A549 (cell line): ENCODE measurements at regions of chr20 and their contacts with region 1.

Region 1: DNA sequence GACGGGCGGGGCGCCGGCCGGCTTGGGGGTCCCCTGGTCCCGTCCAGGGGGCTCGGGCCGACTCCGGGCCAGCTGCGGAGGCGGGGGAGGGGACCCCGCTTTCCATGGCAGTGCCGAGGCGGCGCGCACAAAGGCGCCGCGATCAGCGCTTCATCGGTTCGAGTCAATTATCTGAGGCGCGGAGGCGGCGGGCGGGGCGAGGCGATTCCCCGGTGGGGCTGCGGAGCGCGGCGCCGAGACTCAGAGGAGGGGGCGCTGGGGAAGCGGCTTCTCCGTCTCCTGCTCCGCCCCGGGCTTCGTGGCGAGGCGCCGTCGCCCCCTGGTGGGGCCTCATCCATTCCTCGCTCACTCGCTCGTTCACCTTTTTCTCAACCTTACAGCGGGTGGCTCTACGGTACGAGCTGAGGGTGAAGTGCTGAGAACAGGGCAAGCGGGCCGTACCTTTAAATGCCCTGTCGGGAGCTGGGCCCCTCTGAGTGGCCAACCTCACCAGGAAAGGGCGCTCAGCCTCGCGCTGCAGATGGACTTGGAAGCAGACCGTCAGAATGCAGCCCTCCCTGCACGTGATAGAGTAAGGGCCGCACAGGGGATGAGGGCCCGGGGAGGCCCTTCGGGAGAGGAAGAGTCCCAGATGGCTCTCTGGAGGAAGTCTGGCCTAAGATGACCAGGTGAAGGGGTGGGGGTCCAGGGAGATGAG is 39.9 kb downstream of the SLC52A3 start:
- DNase-seq: peak; percentile 80 to 84
- ATAC-seq: peak; percentile 91 to 97
- H3K4me3 ChIP-seq: peak overlapping the region; percentile 66
- H3K27ac ChIP-seq: peak overlapping the region; percentile 75 to 90
- H3K4me1 ChIP-seq: 0 out of 3 replicates have a peak, but pooled peaks cover 3% of the 10 kb centered on the region
- CTCF ChIP-seq: peak; percentile 89
- EP300 ChIP-seq: no peak
- POLR2A ChIP-seq: no peak
- RAD21 ChIP-seq: peak; percentile 87 to 89

Region 2: DNA sequence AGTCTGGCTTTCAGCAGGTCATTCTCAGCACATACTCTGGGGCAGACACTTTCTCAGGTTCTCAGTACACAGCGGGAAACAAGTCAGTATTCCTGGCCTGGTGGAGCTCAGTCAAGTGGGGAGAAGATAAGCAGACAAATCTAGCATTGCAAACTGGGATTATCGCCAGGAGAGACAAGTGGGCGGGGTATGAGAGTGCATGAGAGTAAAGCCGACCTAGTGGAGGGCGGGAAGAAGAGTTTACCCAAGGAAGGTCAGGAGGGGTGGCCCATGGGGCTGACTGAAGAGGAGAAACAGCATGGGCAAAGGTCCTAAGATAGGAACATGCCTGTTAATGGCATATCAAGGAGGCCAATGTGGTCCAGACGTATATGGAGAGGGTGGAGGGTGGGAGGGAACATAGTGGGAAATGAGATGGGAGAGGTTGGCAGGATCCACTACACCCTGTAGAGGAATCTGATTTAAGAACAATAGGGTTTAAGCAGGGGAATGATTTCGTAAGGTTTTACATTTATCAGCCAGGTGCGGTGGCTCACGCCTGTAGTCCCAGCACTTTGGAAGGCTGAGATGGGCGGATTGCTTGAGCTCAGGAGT is 172.4 kb before region 1 on chr20:
- CTCF ChIA-PET with region 1: interaction called, 432 read pairs
- POLR2A ChIA-PET with region 1: no interaction called
- DNase-seq: no peak
- ATAC-seq: no peak; a peak in 2 of 6 replicates
- H3K4me3 ChIP-seq: no peak overlapping the region
- H3K27ac ChIP-seq: no peak overlapping the region
- H3K4me1 ChIP-seq: peaks cover 16% of the 10 kb centered on the region; the same call in 2 of the 3 replicates
- CTCF ChIP-seq: no peak
- EP300 ChIP-seq: no peak
- POLR2A ChIP-seq: no peak
- RAD21 ChIP-seq: no peak

Region 3: DNA sequence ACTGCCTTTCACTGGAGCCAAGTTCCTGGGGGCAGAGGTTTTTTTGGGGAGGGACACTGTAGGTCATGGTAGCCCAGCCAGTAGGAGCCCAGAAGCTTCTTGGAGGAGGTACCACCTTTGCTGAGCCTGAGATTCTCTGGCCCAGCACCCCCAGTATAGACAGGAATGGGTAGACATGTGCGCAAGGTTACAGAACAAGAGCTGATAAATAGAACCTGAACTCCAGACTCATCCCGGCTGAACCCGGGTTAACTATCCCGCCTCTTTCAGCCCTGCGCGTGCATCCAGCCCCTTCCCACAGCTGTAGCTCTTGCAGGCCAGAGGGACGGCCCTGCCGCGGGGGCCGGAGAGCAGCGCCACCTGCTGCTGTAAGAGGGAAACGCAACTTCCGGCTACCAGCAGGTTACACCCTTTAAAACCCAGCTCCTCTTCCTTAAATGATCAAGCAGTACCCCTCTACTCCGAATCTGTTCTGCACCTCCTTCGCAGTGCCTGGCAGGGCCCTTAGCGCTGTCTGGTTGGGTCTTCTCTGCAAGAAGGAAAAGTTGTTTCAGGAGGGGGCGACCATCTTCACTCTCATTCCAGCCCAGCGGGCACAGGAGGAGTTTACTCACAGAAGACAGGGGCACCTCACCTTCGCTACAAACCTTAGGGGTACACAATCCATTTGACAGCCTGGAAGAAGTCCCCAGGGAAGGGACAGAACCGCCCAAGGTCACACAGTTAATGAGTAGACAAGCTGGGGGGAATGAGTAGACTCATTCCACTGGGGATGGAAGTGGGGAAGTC is 82.9 kb before region 1 on chr20:
- CTCF ChIA-PET with region 1: interaction called, 59 read pairs
- POLR2A ChIA-PET with region 1: no interaction called
- DNase-seq: peak; percentile 87 to 91
- ATAC-seq: peak; percentile 57 to 79
- H3K4me3 ChIP-seq: no peak overlapping the region
- H3K27ac ChIP-seq: peak overlapping the region in 1 of 2 experiments; percentile 50; a peak in 2 of 6 replicates
- H3K4me1 ChIP-seq: peaks cover 25% of the 10 kb centered on the region
- CTCF ChIP-seq: peak; percentile 97
- EP300 ChIP-seq: no peak
- POLR2A ChIP-seq: no peak
- RAD21 ChIP-seq: peak; percentile 73 to 78

Region 4: GRCh38 chr20:658731-659291 is 69.6 kb before region 1 on chr20:
- CTCF ChIA-PET with region 1: interaction called, 10 read pairs
- POLR2A ChIA-PET with region 1: no interaction called
- DNase-seq: no peak
- ATAC-seq: no peak
- H3K4me3 ChIP-seq: no peak overlapping the region
- H3K27ac ChIP-seq: peak overlapping the region; percentile 66 to 69; a peak in 4 of 6 replicates
- H3K4me1 ChIP-seq: peaks cover 53% of the 10 kb centered on the region
- CTCF ChIP-seq: no peak
- EP300 ChIP-seq: no peak
- POLR2A ChIP-seq: no peak
- RAD21 ChIP-seq: no peak

Region 5: GRCh38 chr20:675453-676314 is 52.7 kb before region 1 on chr20 and contains the start of gene SCRT2:
- CTCF ChIA-PET with region 1: interaction called, 29 read pairs
- POLR2A ChIA-PET with region 1: no interaction called
- DNase-seq: peak; percentile 60 to 84
- ATAC-seq: peak; percentile 81 to 88
- H3K4me3 ChIP-seq: peak within 1 kb of the TSS; percentile 32; the same call in 2 of the 3 replicates
- H3K27ac ChIP-seq: no peak within 1 kb of the TSS
- H3K4me1 ChIP-seq: peaks cover 22% of the 10 kb centered on the region
- CTCF ChIP-seq: no peak
- EP300 ChIP-seq: no peak
- POLR2A ChIP-seq: no peak
- RAD21 ChIP-seq: no peak
- polyA plus RNA-seq, gene SCRT2: not detected in 2 replicates

Region 6: DNA sequence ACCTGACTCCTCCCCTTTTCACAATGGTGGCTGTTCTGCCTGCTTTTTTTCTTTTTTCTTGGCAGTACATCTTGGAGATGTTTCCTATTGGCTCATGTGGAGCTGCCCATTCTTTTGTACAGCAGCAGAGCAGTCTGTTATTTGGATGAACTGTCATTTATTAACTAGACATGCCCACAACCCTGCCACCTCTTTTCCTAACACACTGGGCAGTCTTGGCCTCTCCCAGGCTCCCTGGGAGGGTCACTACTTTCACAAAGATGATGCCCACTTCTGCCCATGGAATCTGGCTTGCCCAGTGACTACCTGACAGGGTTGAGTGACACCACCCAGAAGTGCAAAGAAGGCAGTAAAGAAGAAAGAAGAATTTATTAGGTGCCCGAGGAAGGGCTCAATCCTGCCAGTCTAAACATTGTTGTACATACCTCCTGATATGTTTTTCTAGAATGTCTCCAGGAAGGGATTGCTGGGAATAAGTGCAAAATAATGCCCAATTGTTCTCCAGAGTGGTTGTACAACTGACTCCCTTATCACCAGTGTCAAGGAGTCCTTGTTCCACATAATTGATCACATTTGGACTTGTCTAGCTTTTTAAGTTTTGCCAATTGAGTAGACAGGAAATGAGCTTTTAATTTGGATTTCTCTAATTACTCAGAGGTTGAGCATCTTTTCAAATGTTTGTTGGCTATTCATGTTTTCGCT is 33.1 kb before region 1 on chr20:
- CTCF ChIA-PET with region 1: interaction called, 14 read pairs
- POLR2A ChIA-PET with region 1: no interaction called
- DNase-seq: no peak
- ATAC-seq: peak in 1 of 2 experiments; percentile 50; a peak in 2 of 6 replicates
- H3K4me3 ChIP-seq: no peak overlapping the region
- H3K27ac ChIP-seq: no peak overlapping the region
- H3K4me1 ChIP-seq: peaks cover 5% of the 10 kb centered on the region; the same call in 2 of the 3 replicates
- CTCF ChIP-seq: no peak
- EP300 ChIP-seq: no peak
- POLR2A ChIP-seq: no peak
- RAD21 ChIP-seq: no peak